Activated T-helper 1 cell treated with anti-CD3 and anti-CD28 coated beads, Interleukin-12 subunit alpha, Interleukin-12 subunit beta, Interleukin-2, Interleukin-4 antibody, amounts not matched to agents 30 ng/mL and 10 ng/mL and 1 ng/mL, durations not matched to agents 14 hours and 24 hours and 36 hours (primary cell): ENCODE measurements at regions of chr1 and their contacts with region 1.

Region 1: GRCh38 chr1:6235296-6235677 is 477 bp downstream of the ICMT start:
- DNase-seq: peak; percentile 14
- H3K4me3 Mint-ChIP-seq: peak overlapping the region; percentile 91
- H3K27ac Mint-ChIP-seq: peak overlapping the region; percentile 87
- H3K4me1 Mint-ChIP-seq: peaks cover 19% of the 10 kb centered on the region
- H3K27me3 Mint-ChIP-seq: peaks cover 9% of the 10 kb centered on the region

Region 2: GRCh38 chr1:6205849-6206519 is 29.3 kb before region 1 on chr1 and contains the start of gene RNF207:
- intact Hi-C with region 1: loop called (anchors 1 kb)
- DNase-seq: peak; percentile 76
- H3K4me3 Mint-ChIP-seq: peak within 1 kb of the TSS; percentile 85
- H3K27ac Mint-ChIP-seq: peak within 1 kb of the TSS; percentile 68
- H3K4me1 Mint-ChIP-seq: peaks cover 15% of the 10 kb centered on the region
- H3K27me3 Mint-ChIP-seq: peaks cover 3% of the 10 kb centered on the region
- total RNA-seq, gene RNF207: 65.8 and 71.6 TPM in 2 replicates